Activated CD4-positive, alpha-beta T cell treated with anti-CD3 and anti-CD28 coated beads, Interleukin-2, amount 10 ng/mL, durations not matched to agents 24 days and 14 days (primary cell): ENCODE measurements at regions of chr5 and their contacts with region 1.

Region 1: GRCh38 chr5:127030259-127031146 is at the start of gene MARCHF3:
- DNase-seq: peak; percentile 99
- H3K4me3 Mint-ChIP-seq: peak within 1 kb of the TSS; percentile 92
- H3K27ac Mint-ChIP-seq: peak within 1 kb of the TSS; percentile 75
- H3K4me1 Mint-ChIP-seq: peaks cover 10% of the 10 kb centered on the region
- H3K27me3 Mint-ChIP-seq: peaks cover 37% of the 10 kb centered on the region
- total RNA-seq, gene MARCHF3: 2.3 and 4.2 TPM in 2 replicates

Region 2: DNA sequence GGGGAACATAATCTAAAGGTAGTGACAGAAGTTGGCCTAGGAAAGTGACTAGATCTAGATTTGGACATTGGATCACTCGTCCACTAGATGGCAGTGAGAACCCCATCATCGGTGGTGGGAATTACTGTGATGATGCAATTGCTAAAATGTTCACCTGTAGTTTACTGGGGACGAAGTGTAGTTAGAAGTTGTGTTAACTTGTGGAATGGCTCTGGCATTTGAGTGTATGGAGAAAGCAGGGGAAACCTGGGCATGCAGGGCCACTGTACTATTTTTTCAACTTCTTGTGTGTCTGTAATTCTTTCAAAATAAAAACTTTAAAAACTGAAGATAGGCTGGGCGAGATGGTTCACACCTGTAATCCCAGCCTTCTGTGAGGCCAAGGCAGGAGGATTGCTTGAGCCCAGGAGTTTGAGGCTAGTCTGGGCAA is 354.3 kb before region 1 on chr5:
- intact Hi-C with region 1: loop called (anchors 5 kb)
- DNase-seq: peak; percentile 91
- H3K4me3 Mint-ChIP-seq: no peak overlapping the region
- H3K27ac Mint-ChIP-seq: no peak overlapping the region
- H3K4me1 Mint-ChIP-seq: peaks cover 22% of the 10 kb centered on the region
- H3K27me3 Mint-ChIP-seq: no peaks in the 10 kb centered on the region

Region 3: DNA sequence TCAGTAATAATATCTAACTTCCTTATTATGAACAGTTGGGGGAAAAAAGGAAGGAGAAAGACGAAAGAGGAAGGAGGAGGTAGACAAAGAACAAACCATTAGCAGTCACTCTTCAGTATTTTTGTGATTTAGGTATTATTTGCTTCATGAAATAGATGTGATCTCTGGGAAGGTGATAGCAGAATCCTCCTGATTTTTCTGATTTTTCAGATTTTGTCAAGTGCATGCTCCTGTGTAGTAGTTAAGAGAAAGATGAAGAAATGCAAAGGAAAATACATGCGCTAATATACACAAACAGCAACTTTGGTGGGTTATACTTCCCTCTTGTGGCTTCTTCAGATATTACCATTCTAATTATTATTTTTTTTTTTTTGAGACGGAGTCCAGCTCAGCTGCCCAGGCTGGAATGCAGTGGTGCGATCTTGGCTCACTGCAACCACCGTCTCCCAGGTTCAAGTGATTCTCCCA is 221.9 kb before region 1 on chr5:
- intact Hi-C with region 1: loop called (anchors 1 kb)
- DNase-seq: no peak
- H3K4me3 Mint-ChIP-seq: no peak overlapping the region
- H3K27ac Mint-ChIP-seq: peak overlapping the region; percentile 82
- H3K4me1 Mint-ChIP-seq: peaks cover 47% of the 10 kb centered on the region
- H3K27me3 Mint-ChIP-seq: no peaks in the 10 kb centered on the region

Region 4: DNA sequence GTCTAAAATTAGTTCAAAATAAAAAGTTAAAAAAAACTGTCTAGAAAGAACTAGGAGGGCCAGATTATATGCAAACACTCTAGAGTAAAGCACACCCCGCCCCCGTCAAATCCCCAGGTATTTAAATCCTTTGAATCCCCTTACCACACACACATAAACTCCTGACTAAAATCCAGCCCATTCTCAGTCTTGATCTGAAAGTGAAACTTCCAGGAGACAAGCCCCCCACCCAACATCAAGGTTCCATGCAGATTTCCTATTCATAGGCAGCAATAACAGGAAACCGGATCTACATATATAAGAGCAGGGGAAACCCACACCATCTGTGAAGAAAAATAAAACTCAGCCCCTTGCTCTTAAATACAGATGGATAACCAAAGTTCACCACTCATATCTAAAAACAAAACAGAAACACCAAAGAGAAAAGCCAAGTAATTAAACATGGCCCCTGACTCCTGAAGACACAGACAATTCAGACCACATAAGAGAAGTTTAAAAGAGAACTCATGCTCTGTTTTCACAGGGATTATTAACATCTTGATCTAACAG is 42.4 kb before region 1 on chr5:
- intact Hi-C with region 1: loop called (anchors 1 kb)
- DNase-seq: peak; percentile 80
- H3K4me3 Mint-ChIP-seq: peak overlapping the region; percentile 60
- H3K27ac Mint-ChIP-seq: peak overlapping the region; percentile 87
- H3K4me1 Mint-ChIP-seq: peaks cover 19% of the 10 kb centered on the region
- H3K27me3 Mint-ChIP-seq: no peaks in the 10 kb centered on the region

Region 5: GRCh38 chr5:127517480-127518318 is 487.2 kb after region 1 on chr5 and contains the start of gene PRRC1:
- intact Hi-C with region 1: loop called (anchors 5 kb)
- DNase-seq: peak; percentile 94
- H3K4me3 Mint-ChIP-seq: peak within 1 kb of the TSS; percentile 86
- H3K27ac Mint-ChIP-seq: peak within 1 kb of the TSS; percentile 84
- H3K4me1 Mint-ChIP-seq: peaks cover 25% of the 10 kb centered on the region
- H3K27me3 Mint-ChIP-seq: peaks cover 13% of the 10 kb centered on the region
- total RNA-seq, gene PRRC1: 50.4 and 52.3 TPM in 2 replicates